ENCODE measurements at regions of chr1 and their contacts with region 1.

Region 1: DNA sequence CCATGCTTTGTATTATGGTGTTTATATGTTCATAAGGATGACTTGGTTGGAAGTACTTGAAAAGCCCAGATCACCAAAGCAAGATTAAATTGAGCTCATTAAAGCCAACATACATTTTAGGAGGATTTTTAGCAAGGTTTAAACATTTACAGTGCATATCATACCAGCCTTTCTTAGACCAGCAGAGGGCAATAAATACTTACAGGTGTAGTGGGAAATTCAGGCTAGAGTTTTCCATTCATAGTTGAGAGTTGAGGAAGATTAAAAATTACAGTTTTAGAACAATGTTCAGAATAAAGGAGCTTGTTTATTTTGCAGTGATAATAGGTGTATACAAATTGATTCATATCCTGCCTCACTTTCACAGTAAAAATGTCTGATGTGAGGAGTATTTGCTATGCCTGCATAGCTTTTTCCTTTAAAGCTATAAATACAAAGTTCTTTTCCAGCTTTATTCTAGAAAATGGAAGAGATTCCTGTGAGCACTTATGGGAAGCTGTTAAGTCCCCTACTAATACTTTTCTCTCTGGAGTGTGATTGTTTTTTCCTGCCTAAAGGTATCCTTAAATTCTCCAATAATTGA is 35.3 kb downstream of the DTL start:
- DNase-seq: no peak
- ATAC-seq: peak; percentile 46

Region 2: GRCh38 chr1:212291505-212292134 is 220.8 kb after region 1 on chr1:
- intact Hi-C with region 1: loop called (anchors 5 kb)
- DNase-seq: no peak
- ATAC-seq: peak; percentile 70